Endothelial cell of umbilical vein (primary cell): ENCODE measurements at regions of chr6 and their contacts with region 1.

Region 1: GRCh38 chr6:75098709-75099108 is 107.1 kb downstream of the COL12A1 start:
- DNase-seq: peak; percentile 95
- H3K4me3 ChIP-seq: no peak overlapping the region
- H3K27ac ChIP-seq: no peak overlapping the region
- H3K4me1 ChIP-seq: peaks cover 31% of the 10 kb centered on the region
- H3K27me3 ChIP-seq: no peaks in the 10 kb centered on the region
- CTCF ChIP-seq: no peak
- POLR2A ChIP-seq: no peak

Region 2: GRCh38 chr6:75024828-75025227 is 73.9 kb before region 1 on chr6:
- CTCF ChIA-PET with region 1: no interaction called
- POLR2A ChIA-PET with region 1: no interaction called
- dilution Hi-C with region 1: no loop called
- intact Hi-C with region 1: loop called (anchors 2 kb)
- DNase-seq: peak; percentile 81
- H3K4me3 ChIP-seq: no peak overlapping the region
- H3K27ac ChIP-seq: no peak overlapping the region
- H3K4me1 ChIP-seq: peaks cover 22% of the 10 kb centered on the region
- H3K27me3 ChIP-seq: no peaks in the 10 kb centered on the region
- CTCF ChIP-seq: no peak
- POLR2A ChIP-seq: no peak

Region 3: DNA sequence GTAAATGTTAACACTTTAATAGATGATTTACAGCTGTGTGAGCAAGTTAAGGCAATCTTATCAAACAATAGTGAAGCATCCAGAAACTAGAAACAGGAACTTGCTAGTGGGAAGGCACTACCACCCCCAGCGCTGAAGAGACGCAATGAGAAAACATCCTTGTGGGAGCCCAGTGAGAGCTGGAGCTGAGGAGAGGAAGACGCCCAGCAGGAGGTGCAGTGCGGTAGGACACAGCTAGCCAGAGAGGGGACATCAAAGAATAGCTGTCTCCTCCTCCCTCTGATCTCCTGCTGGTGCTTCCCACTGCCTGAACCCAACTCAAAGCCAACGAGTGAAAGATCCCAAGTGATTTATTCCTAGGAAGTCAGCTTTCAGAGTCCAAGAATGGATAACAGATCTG is 33.2 kb before region 1 on chr6:
- CTCF ChIA-PET with region 1: no interaction called
- POLR2A ChIA-PET with region 1: no interaction called
- dilution Hi-C with region 1: no loop called
- intact Hi-C with region 1: no loop called
- DNase-seq: peak; percentile 31
- H3K4me3 ChIP-seq: no peak overlapping the region
- H3K27ac ChIP-seq: no peak overlapping the region
- H3K4me1 ChIP-seq: no peaks in the 10 kb centered on the region
- H3K27me3 ChIP-seq: no peaks in the 10 kb centered on the region
- CTCF ChIP-seq: peak in 1 of 2 donors; percentile 6
- POLR2A ChIP-seq: no peak

Region 4: GRCh38 chr6:75115481-75115880 is 16.8 kb after region 1 on chr6:
- CTCF ChIA-PET with region 1: interaction called, 10 read pairs
- POLR2A ChIA-PET with region 1: no interaction called
- dilution Hi-C with region 1: no loop called
- intact Hi-C with region 1: no loop called
- DNase-seq: no peak
- H3K4me3 ChIP-seq: no peak overlapping the region
- H3K27ac ChIP-seq: no peak overlapping the region
- H3K4me1 ChIP-seq: no peaks in the 10 kb centered on the region
- H3K27me3 ChIP-seq: no peaks in the 10 kb centered on the region
- CTCF ChIP-seq: no peak
- POLR2A ChIP-seq: no peak

Region 5: GRCh38 chr6:75143191-75143590 is 44.5 kb after region 1 on chr6:
- CTCF ChIA-PET with region 1: no interaction called
- POLR2A ChIA-PET with region 1: no interaction called
- dilution Hi-C with region 1: no loop called
- intact Hi-C with region 1: no loop called
- DNase-seq: no peak
- H3K4me3 ChIP-seq: no peak overlapping the region
- H3K27ac ChIP-seq: no peak overlapping the region
- H3K4me1 ChIP-seq: no peaks in the 10 kb centered on the region
- H3K27me3 ChIP-seq: no peaks in the 10 kb centered on the region
- CTCF ChIP-seq: no peak
- POLR2A ChIP-seq: no peak

Region 6: GRCh38 chr6:75481936-75482593 is 383.4 kb after region 1 on chr6:
- CTCF ChIA-PET with region 1: no interaction called
- POLR2A ChIA-PET with region 1: no interaction called
- dilution Hi-C with region 1: no loop called
- intact Hi-C with region 1: no loop called
- DNase-seq: no peak
- H3K4me3 ChIP-seq: no peak overlapping the region
- H3K27ac ChIP-seq: no peak overlapping the region
- H3K4me1 ChIP-seq: peaks cover 32% of the 10 kb centered on the region
- H3K27me3 ChIP-seq: no peaks in the 10 kb centered on the region
- CTCF ChIP-seq: no peak
- POLR2A ChIP-seq: no peak